Activated CD8-positive, alpha-beta T cell treated with anti-CD3 and anti-CD28 coated beads for 36 hours (primary cell): ENCODE measurements at regions of chr7 and their contacts with region 1.

Region 1: GRCh38 chr7:44240983-44241510 is 40.3 kb downstream of the YKT6 start:
- DNase-seq: peak; percentile 77
- ATAC-seq: peak; percentile 92
- H3K4me3 Mint-ChIP-seq: no peak overlapping the region
- H3K27ac Mint-ChIP-seq: no peak overlapping the region
- H3K4me1 Mint-ChIP-seq: no peaks in the 10 kb centered on the region
- H3K27me3 Mint-ChIP-seq: no peaks in the 10 kb centered on the region
- CTCF ChIP-seq: peak; percentile 74

Region 2: GRCh38 chr7:44257618-44258422 is 16.8 kb after region 1 on chr7:
- CTCF ChIA-PET with region 1: interaction called, 15 read pairs
- POLR2A ChIA-PET with region 1: interaction called, 4 read pairs
- intact Hi-C with region 1: no loop called
- DNase-seq: peak; percentile 93
- ATAC-seq: peak; percentile 91
- H3K4me3 Mint-ChIP-seq: peak overlapping the region; percentile 20
- H3K27ac Mint-ChIP-seq: peak overlapping the region; percentile 85
- H3K4me1 Mint-ChIP-seq: peaks cover 52% of the 10 kb centered on the region
- H3K27me3 Mint-ChIP-seq: no peaks in the 10 kb centered on the region
- CTCF ChIP-seq: no peak

Region 3: GRCh38 chr7:44307301-44307900 is 66.4 kb after region 1 on chr7:
- CTCF ChIA-PET with region 1: interaction called, 14 read pairs
- POLR2A ChIA-PET with region 1: no interaction called
- intact Hi-C with region 1: loop called (anchors 5 kb)
- DNase-seq: peak; percentile 44
- ATAC-seq: peak; percentile 70
- H3K4me3 Mint-ChIP-seq: no peak overlapping the region
- H3K27ac Mint-ChIP-seq: no peak overlapping the region
- H3K4me1 Mint-ChIP-seq: peaks cover 2% of the 10 kb centered on the region
- H3K27me3 Mint-ChIP-seq: peaks cover 13% of the 10 kb centered on the region
- CTCF ChIP-seq: peak; percentile 45

Region 4: GRCh38 chr7:44368885-44369284 is 127.8 kb after region 1 on chr7:
- CTCF ChIA-PET with region 1: interaction called, 11 read pairs
- POLR2A ChIA-PET with region 1: no interaction called
- intact Hi-C with region 1: no loop called
- DNase-seq: no peak
- ATAC-seq: no peak
- H3K4me3 Mint-ChIP-seq: no peak overlapping the region
- H3K27ac Mint-ChIP-seq: no peak overlapping the region
- H3K4me1 Mint-ChIP-seq: no peaks in the 10 kb centered on the region
- H3K27me3 Mint-ChIP-seq: peaks cover 8% of the 10 kb centered on the region
- CTCF ChIP-seq: no peak